H1 (cell line): ENCODE measurements at regions of chr1 and their contacts with region 1.

Region 1: GRCh38 chr1:26035959-26036755 is 9.8 kb downstream of the SLC30A2 start:
- DNase-seq: peak in 1 of 2 experiments; percentile 96
- H3K4me3 ChIP-seq: peak overlapping the region; percentile 39 to 85 (median 76)
- H3K27ac ChIP-seq: no peak overlapping the region
- H3K4me1 ChIP-seq: peaks cover 0 to 8% (median 6%) of the 10 kb centered on the region in 4 experiments; a peak in 5 of 7 replicates
- H3K27me3 ChIP-seq: peaks cover 6 to 26% (median 20%) of the 10 kb centered on the region in 4 experiments; a peak in 6 of 7 replicates
- CTCF ChIP-seq: peak; percentile 90 to 99 (median 93)
- EP300 ChIP-seq: no peak
- POLR2A ChIP-seq: no peak
- RAD21 ChIP-seq: peak; percentile 92 to 95

Region 2: GRCh38 chr1:26021647-26022403 is 14.3 kb before region 1 on chr1 and contains the start of gene EXTL1:
- CTCF ChIA-PET with region 1: interaction called, 12 read pairs
- POLR2A ChIA-PET with region 1: interaction called, 6 read pairs
- DNase-seq: peak; percentile 59 to 81
- H3K4me3 ChIP-seq: peak within 1 kb of the TSS; percentile 36 to 55 (median 38)
- H3K27ac ChIP-seq: no peak within 1 kb of the TSS; the same call in 1 of the 2 replicates
- H3K4me1 ChIP-seq: peaks cover 0 to 19% (median 12%) of the 10 kb centered on the region in 4 experiments; a peak in 6 of 7 replicates
- H3K27me3 ChIP-seq: no peaks in the 10 kb centered on the region
- CTCF ChIP-seq: no peak
- EP300 ChIP-seq: no peak
- POLR2A ChIP-seq: peak in 1 of 2 experiments; percentile 63; a peak in 2 of 3 replicates
- RAD21 ChIP-seq: no peak
- total RNA-seq, gene EXTL1: 1.2 and 1.3 TPM in 2 replicates

Region 3: GRCh38 chr1:26060832-26061574 is 24.8 kb after region 1 on chr1:
- CTCF ChIA-PET with region 1: interaction called, 14 read pairs
- POLR2A ChIA-PET with region 1: no interaction called
- DNase-seq: no peak
- H3K4me3 ChIP-seq: no peak overlapping the region
- H3K27ac ChIP-seq: no peak overlapping the region
- H3K4me1 ChIP-seq: no peaks in the 10 kb centered on the region
- H3K27me3 ChIP-seq: peaks cover 0 to 2% (median 0%) of the 10 kb centered on the region in 4 experiments; a peak in 2 of 7 replicates
- CTCF ChIP-seq: no peak
- EP300 ChIP-seq: no peak
- POLR2A ChIP-seq: no peak
- RAD21 ChIP-seq: no peak

Region 4: DNA sequence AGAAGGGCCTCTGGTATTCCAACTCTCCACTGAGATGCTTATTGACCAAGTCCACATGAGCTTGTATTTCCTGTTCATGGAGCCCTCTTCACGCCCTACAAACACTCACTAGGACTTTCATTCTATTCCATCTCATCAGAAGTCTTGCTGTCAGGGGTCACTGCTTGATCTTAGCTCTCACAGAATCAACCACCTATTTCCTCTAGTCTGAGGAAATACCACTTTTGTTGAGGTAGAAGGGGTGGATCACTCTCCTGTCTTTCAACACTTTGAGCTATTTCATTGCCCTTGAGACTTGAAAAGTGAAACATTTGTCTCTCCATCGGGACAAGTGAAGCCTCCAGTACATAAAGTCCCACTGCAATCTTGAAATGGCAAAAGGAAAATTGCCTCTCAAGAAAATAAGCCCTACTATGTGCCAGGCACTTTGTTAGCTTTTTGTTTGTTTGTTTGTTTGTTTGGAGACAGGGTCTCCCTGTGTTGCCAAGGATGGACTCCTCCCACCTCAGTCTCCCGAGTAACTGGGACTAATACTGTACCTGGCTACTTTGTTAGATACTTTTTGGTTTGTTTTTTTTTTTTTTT is 102.9 kb after region 1 on chr1:
- CTCF ChIA-PET with region 1: interaction called, 56 read pairs
- POLR2A ChIA-PET with region 1: interaction called, 3 read pairs
- DNase-seq: peak in 1 of 2 experiments; percentile 14
- H3K4me3 ChIP-seq: no peak overlapping the region
- H3K27ac ChIP-seq: no peak overlapping the region
- H3K4me1 ChIP-seq: no peaks in the 10 kb centered on the region
- H3K27me3 ChIP-seq: no peaks in the 10 kb centered on the region
- CTCF ChIP-seq: no peak
- EP300 ChIP-seq: no peak
- POLR2A ChIP-seq: no peak
- RAD21 ChIP-seq: no peak

Region 5: DNA sequence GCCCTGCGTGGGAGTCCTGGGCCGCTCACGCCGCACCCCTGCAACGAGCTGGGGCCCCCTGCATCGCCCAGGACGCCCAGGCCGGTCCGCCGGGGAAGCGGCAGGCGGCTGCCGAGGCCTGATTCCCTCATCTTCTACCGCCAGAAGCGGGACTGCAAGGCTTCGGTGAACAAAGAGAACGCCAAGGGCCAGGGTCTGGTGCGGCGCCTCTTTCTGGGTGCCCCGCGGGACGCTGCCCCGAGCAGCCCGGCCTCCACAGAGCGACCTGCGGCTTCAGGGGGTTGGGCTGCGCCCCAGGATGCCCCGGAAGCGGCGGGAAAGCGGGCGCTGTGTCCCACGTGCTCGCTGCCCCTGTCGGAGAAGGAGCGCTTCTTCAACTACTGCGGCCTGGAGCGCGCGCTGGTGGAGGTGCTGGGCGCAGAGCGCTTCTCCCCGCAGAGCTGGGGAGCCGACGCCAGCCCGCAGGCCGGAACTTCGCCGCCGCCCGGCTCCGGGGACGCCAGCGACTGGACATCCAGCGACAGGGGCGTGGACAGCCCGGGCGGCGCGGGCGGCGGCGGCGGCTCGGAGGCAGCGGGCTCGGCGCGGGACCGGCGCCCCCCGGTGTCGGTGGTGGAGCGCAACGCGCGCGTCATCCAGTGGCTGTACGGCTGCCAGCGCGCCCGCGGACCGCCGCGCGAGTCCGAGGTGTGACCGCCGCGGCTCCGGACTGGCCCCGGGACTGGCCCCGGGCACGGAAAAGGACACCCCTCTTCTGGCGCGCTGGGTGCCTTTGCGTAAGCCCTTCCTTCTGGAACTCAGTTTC is 125.5 kb after region 1 on chr1:
- CTCF ChIA-PET with region 1: interaction called, 18 read pairs
- POLR2A ChIA-PET with region 1: no interaction called
- DNase-seq: peak in 1 of 2 experiments; percentile 84
- H3K4me3 ChIP-seq: peak overlapping the region; percentile 11 to 66 (median 48)
- H3K27ac ChIP-seq: no peak overlapping the region
- H3K4me1 ChIP-seq: peaks cover 10 to 47% (median 21%) of the 10 kb centered on the region in 4 experiments
- H3K27me3 ChIP-seq: peaks cover 35 to 78% (median 71%) of the 10 kb centered on the region in 4 experiments
- CTCF ChIP-seq: 0 out of 4 replicates have a peak, but pooled peaks of 1 of the 3 experiments have one; percentile 2
- EP300 ChIP-seq: no peak
- POLR2A ChIP-seq: 0 out of 3 replicates have a peak, but pooled peaks of 1 of the 2 experiments have one; percentile 40
- RAD21 ChIP-seq: no peak